ENCODE measurements at regions of chr13 and their contacts with region 1.

Region 1: GRCh38 chr13:107450931-107451330 is 764.4 kb downstream of the LIG4 start:
- DNase-seq: peak in 1 of 2 donors; percentile 78
- H3K4me3 ChIP-seq: peak overlapping the region in 1 of 2 donors; percentile 39
- H3K27ac ChIP-seq: peak overlapping the region; percentile 53 to 58
- H3K4me1 ChIP-seq: peaks cover 0 to 4% of the 10 kb centered on the region in 2 donors
- H3K27me3 ChIP-seq: no peaks in the 10 kb centered on the region
- CTCF ChIP-seq: no peak

Region 2: GRCh38 chr13:108218044-108218974 is 767.4 kb after region 1 on chr13 and contains the start of gene ABHD13:
- intact Hi-C with region 1: loop called (anchors 10 kb)
- DNase-seq: peak; percentile 46 to 94
- H3K4me3 ChIP-seq: peak within 1 kb of the TSS; percentile 74 to 92
- H3K27ac ChIP-seq: peak within 1 kb of the TSS; percentile 74 to 84
- H3K4me1 ChIP-seq: peaks cover 4 to 17% of the 10 kb centered on the region in 2 donors
- H3K27me3 ChIP-seq: no peaks in the 10 kb centered on the region
- CTCF ChIP-seq: peak in 1 of 3 experiments; percentile 7
- total RNA-seq, gene ABHD13: 4.5 TPM